Ovary (tissue), 10 donors: ENCODE measurements at regions of chr14 and their contacts with region 1.

Region 1: GRCh38 chr14:60724137-60724619 is at the start of gene SIX4:
- DNase-seq: peak; percentile 66 to 76 (median 70)
- H3K4me3 ChIP-seq: peak within 1 kb of the TSS; percentile 80
- H3K27ac ChIP-seq: peak within 1 kb of the TSS; percentile 88 to 92
- H3K4me1 ChIP-seq: no peaks in the 10 kb centered on the region
- H3K27me3 ChIP-seq: no peaks in the 10 kb centered on the region
- CTCF ChIP-seq: no peak
- EP300 ChIP-seq: no peak
- POLR2A ChIP-seq: peak; percentile 51
- total RNA-seq, gene SIX4: 3.5 to 11.1 (median 7.7) TPM

Region 2: GRCh38 chr14:60514741-60515491 is 209.3 kb before region 1 on chr14:
- intact Hi-C with region 1: no loop called
- DNase-seq: no peak
- H3K4me3 ChIP-seq: peak overlapping the region; percentile 10
- H3K27ac ChIP-seq: no peak overlapping the region
- H3K4me1 ChIP-seq: peaks cover 2% of the 10 kb centered on the region
- H3K27me3 ChIP-seq: no peaks in the 10 kb centered on the region
- CTCF ChIP-seq: no peak
- EP300 ChIP-seq: no peak
- POLR2A ChIP-seq: no peak

Region 3: DNA sequence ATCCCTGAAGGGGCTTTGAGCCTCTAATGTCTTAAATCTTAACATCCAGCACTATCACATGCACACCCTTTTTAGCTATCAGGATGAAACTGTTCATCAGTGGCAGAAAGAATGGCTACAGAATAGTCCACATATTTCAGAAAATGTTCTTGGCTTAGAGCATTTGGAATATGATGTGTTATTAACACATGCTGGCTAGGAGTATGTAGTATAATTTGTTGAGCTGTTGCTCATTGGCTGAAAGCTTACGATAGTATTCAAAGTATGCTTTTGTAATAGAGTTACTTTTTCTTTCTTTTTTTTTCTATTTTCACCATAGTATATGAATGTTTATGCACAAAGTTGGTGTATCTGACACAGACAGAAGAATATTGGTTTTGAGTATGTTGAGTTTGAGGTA is 65.5 kb after region 1 on chr14:
- intact Hi-C with region 1: no loop called
- DNase-seq: no peak
- H3K4me3 ChIP-seq: no peak overlapping the region
- H3K27ac ChIP-seq: no peak overlapping the region
- H3K4me1 ChIP-seq: no peaks in the 10 kb centered on the region
- H3K27me3 ChIP-seq: no peaks in the 10 kb centered on the region
- CTCF ChIP-seq: no peak
- EP300 ChIP-seq: no peak
- POLR2A ChIP-seq: no peak

Region 4: DNA sequence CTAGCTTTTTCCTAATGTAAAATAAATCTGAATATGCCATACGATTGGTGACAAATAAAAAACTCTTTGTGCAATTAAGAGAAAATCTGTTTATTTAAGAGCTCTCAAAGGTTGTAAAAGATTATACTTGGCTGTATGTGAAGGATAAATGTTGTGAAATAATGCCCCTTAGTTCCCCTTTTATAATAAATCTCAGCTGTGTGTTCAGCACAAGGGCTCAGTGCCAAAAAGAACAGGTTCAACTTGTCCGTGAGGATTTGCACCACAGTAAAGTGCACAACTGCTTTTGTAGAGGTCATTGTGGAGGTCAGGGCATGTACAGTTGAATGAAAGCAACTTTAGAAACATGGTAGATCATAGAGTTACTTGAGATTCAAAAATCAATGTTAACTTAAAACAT is 138.1 kb after region 1 on chr14:
- intact Hi-C with region 1: loop called in 1 of 4 experiments (anchors 10 kb)
- DNase-seq: peak in 3 of 5 donors; percentile 66 to 71 (median 70)
- H3K4me3 ChIP-seq: no peak overlapping the region
- H3K27ac ChIP-seq: peak overlapping the region in 1 of 2 donors; percentile 23
- H3K4me1 ChIP-seq: no peaks in the 10 kb centered on the region
- H3K27me3 ChIP-seq: no peaks in the 10 kb centered on the region
- CTCF ChIP-seq: no peak
- EP300 ChIP-seq: no peak
- POLR2A ChIP-seq: no peak

Region 5: GRCh38 chr14:60980811-60981632 is 256.8 kb after region 1 on chr14 and contains the starts of genes SLC38A6 and TRMT5:
- intact Hi-C with region 1: loop called in 2 of 4 experiments (anchors 10 kb)
- DNase-seq: peak; percentile 92 to 97 (median 96)
- H3K4me3 ChIP-seq: peak within 1 kb of the TSS; percentile 90
- H3K27ac ChIP-seq: peak within 1 kb of the TSS; percentile 83 to 92
- H3K4me1 ChIP-seq: peaks cover 6% of the 10 kb centered on the region
- H3K27me3 ChIP-seq: no peaks in the 10 kb centered on the region
- CTCF ChIP-seq: no peak
- EP300 ChIP-seq: no peak
- POLR2A ChIP-seq: peak; percentile 68
- total RNA-seq, gene SLC38A6: 8.4 to 18.7 (median 15.1) TPM
- total RNA-seq, gene TRMT5: 5.7 to 22.8 (median 15.7) TPM